A673 (cell line): ENCODE measurements at regions of chr5 and their contacts with region 1.

Region 1: GRCh38 chr5:159174511-159175168 is 34.7 kb downstream of the RNF145 start:
- DNase-seq: no peak
- H3K4me3 ChIP-seq: no peak overlapping the region
- H3K27ac ChIP-seq: peak overlapping the region; percentile 8
- H3K4me1 ChIP-seq: peaks cover 29% of the 10 kb centered on the region
- H3K27me3 ChIP-seq: no peaks in the 10 kb centered on the region
- CTCF ChIP-seq: no peak

Region 2: GRCh38 chr5:158485604-158486081 is 689.0 kb before region 1 on chr5:
- CTCF ChIA-PET with region 1: no interaction called
- POLR2A ChIA-PET with region 1: no interaction called
- intact Hi-C with region 1: no loop called
- DNase-seq: no peak
- H3K4me3 ChIP-seq: no peak overlapping the region
- H3K27ac ChIP-seq: no peak overlapping the region
- H3K4me1 ChIP-seq: no peaks in the 10 kb centered on the region
- H3K27me3 ChIP-seq: no peaks in the 10 kb centered on the region
- CTCF ChIP-seq: no peak

Region 3: DNA sequence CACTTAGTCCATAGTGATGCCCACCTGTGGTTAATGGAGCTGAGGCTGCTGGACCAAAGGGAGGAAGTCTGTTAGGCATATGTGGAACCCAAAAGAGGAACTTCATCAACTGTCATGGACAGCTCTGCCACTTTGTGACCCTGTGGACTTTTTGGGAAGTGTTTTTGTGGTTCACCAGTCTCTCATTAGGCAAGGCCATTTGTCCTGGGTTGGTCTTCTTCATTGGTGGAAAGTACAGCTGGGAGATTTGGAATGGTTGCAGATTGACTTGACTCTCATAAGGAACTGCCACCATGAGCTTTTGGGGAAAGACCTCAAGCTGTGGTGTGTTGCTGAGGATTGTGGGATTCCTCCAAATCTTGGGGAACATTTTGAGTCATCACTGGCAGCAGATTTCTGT is 187.6 kb after region 1 on chr5:
- CTCF ChIA-PET with region 1: no interaction called
- POLR2A ChIA-PET with region 1: no interaction called
- intact Hi-C with region 1: no loop called
- DNase-seq: no peak
- H3K4me3 ChIP-seq: no peak overlapping the region
- H3K27ac ChIP-seq: no peak overlapping the region
- H3K4me1 ChIP-seq: no peaks in the 10 kb centered on the region
- H3K27me3 ChIP-seq: peaks cover 4% of the 10 kb centered on the region
- CTCF ChIP-seq: no peak

Region 4: DNA sequence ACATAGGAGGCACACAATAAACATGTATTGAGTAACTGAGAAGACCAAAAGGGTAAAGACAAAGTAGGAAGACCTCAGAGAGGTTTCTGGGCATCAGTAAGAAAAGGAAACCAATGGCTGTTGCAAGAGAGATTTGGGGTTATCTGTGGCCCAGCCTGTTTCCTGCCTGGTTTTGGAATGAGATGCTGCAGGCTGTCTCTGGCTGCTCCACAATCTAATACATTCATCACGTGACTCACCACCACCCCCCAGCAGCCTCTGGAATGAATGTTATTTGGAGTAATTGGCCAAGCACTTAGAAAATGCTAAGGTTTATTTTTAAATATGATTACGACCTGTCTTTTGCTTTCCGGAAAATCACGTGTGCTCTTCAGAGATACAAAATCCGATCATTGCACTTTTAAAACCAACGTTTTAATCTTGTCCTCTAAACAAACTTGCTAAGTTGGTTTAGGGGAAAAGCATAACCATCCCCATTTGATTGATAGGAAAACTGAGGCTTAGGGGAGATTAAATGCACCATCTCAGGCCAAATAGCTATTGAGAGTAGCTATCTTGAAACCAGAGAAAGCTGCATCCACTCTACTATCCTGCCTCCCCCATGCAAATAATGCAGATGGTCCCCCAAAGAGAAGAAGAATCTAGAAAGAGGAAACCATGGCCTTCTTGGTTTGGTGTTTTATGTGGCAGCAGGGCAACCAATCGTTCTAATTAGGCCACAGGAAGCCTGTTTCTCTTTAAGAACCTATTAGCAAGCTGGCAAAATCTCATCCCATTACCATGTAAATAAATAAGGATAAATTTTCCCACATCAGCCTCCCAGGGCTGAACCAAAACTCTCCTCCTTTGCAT is 589.9 kb after region 1 on chr5:
- CTCF ChIA-PET with region 1: no interaction called
- POLR2A ChIA-PET with region 1: interaction called, 11 read pairs
- intact Hi-C with region 1: no loop called
- DNase-seq: no peak
- H3K4me3 ChIP-seq: no peak overlapping the region
- H3K27ac ChIP-seq: no peak overlapping the region
- H3K4me1 ChIP-seq: no peaks in the 10 kb centered on the region
- H3K27me3 ChIP-seq: peaks cover 8% of the 10 kb centered on the region
- CTCF ChIP-seq: no peak

Region 5: DNA sequence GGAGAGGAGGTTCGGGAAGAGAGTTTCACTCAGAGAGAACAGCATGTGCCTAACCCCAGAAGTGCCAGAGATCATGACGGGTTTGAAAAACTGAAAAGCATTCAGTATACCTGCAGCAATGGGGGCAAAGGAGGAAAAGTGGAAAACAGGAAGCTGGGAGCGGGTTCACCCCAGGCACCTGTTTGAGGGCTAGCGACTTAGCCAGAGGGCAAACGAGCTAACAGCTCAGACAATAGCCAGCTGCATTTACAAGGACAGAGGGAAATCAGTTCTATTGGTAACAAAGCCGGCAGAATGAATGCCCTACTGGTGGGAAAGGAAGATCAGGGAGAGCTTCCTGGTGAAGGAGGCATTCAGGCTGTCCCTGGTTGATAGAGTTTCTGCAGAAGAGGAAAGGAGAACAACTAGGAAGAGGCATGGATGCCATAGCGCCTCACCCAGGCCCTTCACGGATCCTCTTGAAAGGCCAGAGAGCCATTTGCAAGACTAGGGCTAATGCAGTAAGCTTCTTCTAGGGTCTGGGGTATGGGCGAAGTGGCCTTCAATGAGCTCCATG is 599.9 kb after region 1 on chr5:
- CTCF ChIA-PET with region 1: no interaction called
- POLR2A ChIA-PET with region 1: no interaction called
- intact Hi-C with region 1: no loop called
- DNase-seq: no peak
- H3K4me3 ChIP-seq: no peak overlapping the region
- H3K27ac ChIP-seq: no peak overlapping the region
- H3K4me1 ChIP-seq: no peaks in the 10 kb centered on the region
- H3K27me3 ChIP-seq: peaks cover 28% of the 10 kb centered on the region
- CTCF ChIP-seq: no peak